K562 (cell line): ENCODE measurements at regions of chr3 and their contacts with region 1.

Region 1: DNA sequence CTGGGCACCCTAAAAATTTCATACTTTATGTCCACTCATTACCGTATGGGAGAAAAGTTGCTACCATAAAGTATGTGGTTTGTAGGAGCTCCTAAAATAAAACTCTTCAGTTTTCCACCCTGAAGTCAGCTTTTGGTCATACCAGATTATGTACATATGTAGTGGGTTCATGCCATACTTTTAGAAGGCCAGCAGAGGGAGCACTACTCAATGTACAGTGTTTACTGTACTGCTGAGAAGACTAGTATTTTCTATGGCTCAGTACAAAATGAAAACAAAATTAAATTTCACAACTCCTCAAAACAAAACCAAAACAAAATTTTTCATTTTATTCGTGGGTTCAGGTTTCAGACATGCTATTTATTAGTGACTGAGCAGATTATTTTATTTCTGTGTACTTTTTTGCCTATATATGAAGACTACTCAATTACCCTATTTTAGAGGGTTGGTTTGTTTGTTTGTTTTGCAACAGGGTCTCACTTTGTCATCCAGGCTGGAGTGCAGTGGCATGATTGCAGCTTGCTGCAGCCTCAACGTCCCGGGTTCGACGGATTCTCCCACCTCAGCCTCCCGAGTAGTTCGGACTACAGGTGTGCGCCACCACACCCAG is 24.3 kb downstream of the NXPE3 start:
- DNase-seq: peak; percentile 34 to 72 (median 51)
- ATAC-seq: peak; percentile 98
- H3K4me3 ChIP-seq: no peak overlapping the region
- H3K27ac ChIP-seq: no peak overlapping the region
- H3K4me1 ChIP-seq: no peaks in the 10 kb centered on the region
- H3K27me3 ChIP-seq: no peaks in the 10 kb centered on the region
- CTCF ChIP-seq: peak; percentile 35 to 62 (median 58); a peak in 5 of 6 replicates
- EP300 ChIP-seq: no peak
- POLR2A ChIP-seq: no peak
- RAD21 ChIP-seq: peak in 1 of 2 experiments; percentile 56; a peak in 2 of 4 replicates

Region 2: GRCh38 chr3:101695779-101696372 is 107.4 kb before region 1 on chr3:
- CTCF ChIA-PET with region 1: no interaction called
- POLR2A ChIA-PET with region 1: no interaction called
- in situ Hi-C with region 1: no loop called
- intact Hi-C with region 1: loop called (anchors 2 kb)
- DNase-seq: peak in 3 of 4 experiments; percentile 8 to 68 (median 13)
- ATAC-seq: no peak
- H3K4me3 ChIP-seq: no peak overlapping the region
- H3K27ac ChIP-seq: no peak overlapping the region
- H3K4me1 ChIP-seq: peaks cover 2 to 4% of the 10 kb centered on the region in 2 experiments; a peak in 3 of 5 replicates
- H3K27me3 ChIP-seq: no peaks in the 10 kb centered on the region
- CTCF ChIP-seq: peak; percentile 61 to 70 (median 67)
- EP300 ChIP-seq: no peak
- POLR2A ChIP-seq: no peak
- RAD21 ChIP-seq: peak; percentile 48 to 54

Region 3: GRCh38 chr3:101791778-101792177 is 11.5 kb before region 1 on chr3:
- CTCF ChIA-PET with region 1: no interaction called
- POLR2A ChIA-PET with region 1: no interaction called
- in situ Hi-C with region 1: no loop called
- intact Hi-C with region 1: no loop called
- DNase-seq: no peak
- ATAC-seq: no peak
- H3K4me3 ChIP-seq: no peak overlapping the region
- H3K27ac ChIP-seq: no peak overlapping the region
- H3K4me1 ChIP-seq: no peaks in the 10 kb centered on the region
- H3K27me3 ChIP-seq: no peaks in the 10 kb centered on the region
- CTCF ChIP-seq: no peak
- EP300 ChIP-seq: no peak
- POLR2A ChIP-seq: no peak
- RAD21 ChIP-seq: no peak

Region 4: DNA sequence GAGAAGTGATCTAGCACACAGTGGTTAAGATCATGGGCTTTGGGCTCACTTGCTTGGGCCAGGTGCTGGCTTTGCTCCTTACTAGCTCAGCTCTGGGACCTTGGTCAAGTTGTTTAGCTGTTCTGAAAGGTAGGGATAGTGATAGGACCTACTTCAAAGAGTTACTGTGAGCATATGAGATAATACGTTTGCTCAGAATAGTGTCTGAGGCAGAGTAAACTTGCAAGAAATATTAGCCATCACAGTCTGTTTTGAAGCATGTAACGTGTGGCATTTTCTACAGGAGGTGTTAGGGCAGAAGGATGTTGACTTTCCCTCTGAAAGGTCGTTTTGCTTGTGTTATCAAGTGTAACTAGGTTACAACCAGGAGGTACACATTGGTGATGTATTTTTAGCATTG is 11.6 kb after region 1 on chr3:
- CTCF ChIA-PET with region 1: no interaction called
- POLR2A ChIA-PET with region 1: no interaction called
- in situ Hi-C with region 1: no loop called
- intact Hi-C with region 1: no loop called
- DNase-seq: no peak
- ATAC-seq: no peak
- H3K4me3 ChIP-seq: no peak overlapping the region
- H3K27ac ChIP-seq: no peak overlapping the region
- H3K4me1 ChIP-seq: no peaks in the 10 kb centered on the region
- H3K27me3 ChIP-seq: no peaks in the 10 kb centered on the region
- CTCF ChIP-seq: no peak
- EP300 ChIP-seq: no peak
- POLR2A ChIP-seq: no peak
- RAD21 ChIP-seq: no peak

Region 5: GRCh38 chr3:102148598-102149337 is 345.5 kb after region 1 on chr3:
- CTCF ChIA-PET with region 1: no interaction called
- POLR2A ChIA-PET with region 1: no interaction called
- in situ Hi-C with region 1: no loop called
- intact Hi-C with region 1: no loop called
- DNase-seq: no peak
- ATAC-seq: no peak
- H3K4me3 ChIP-seq: no peak overlapping the region
- H3K27ac ChIP-seq: no peak overlapping the region
- H3K4me1 ChIP-seq: no peaks in the 10 kb centered on the region
- H3K27me3 ChIP-seq: no peaks in the 10 kb centered on the region
- CTCF ChIP-seq: no peak
- EP300 ChIP-seq: no peak
- POLR2A ChIP-seq: no peak
- RAD21 ChIP-seq: no peak

Region 6: GRCh38 chr3:102536456-102536855 is 733.2 kb after region 1 on chr3:
- CTCF ChIA-PET with region 1: no interaction called
- POLR2A ChIA-PET with region 1: no interaction called
- in situ Hi-C with region 1: loop called (anchors 25 kb)
- intact Hi-C with region 1: no loop called
- DNase-seq: peak in 1 of 4 experiments; percentile 2
- ATAC-seq: no peak
- H3K4me3 ChIP-seq: no peak overlapping the region
- H3K27ac ChIP-seq: no peak overlapping the region
- H3K4me1 ChIP-seq: no peaks in the 10 kb centered on the region
- H3K27me3 ChIP-seq: no peaks in the 10 kb centered on the region
- CTCF ChIP-seq: peak in 1 of 3 experiments; percentile 20; a peak in 2 of 6 replicates
- EP300 ChIP-seq: no peak
- POLR2A ChIP-seq: no peak
- RAD21 ChIP-seq: peak; percentile 62 to 63; a peak in 3 of 4 replicates